ENCODE measurements at regions of chr17 and their contacts with region 1.

Region 1: GRCh38 chr17:45828628-45829027 is 16.1 kb upstream of the SPPL2C start:
- DNase-seq: no peak
- H3K4me3 Mint-ChIP-seq: no peak overlapping the region
- H3K27ac Mint-ChIP-seq: peak overlapping the region; percentile 58
- H3K4me1 Mint-ChIP-seq: peaks cover 7% of the 10 kb centered on the region
- H3K27me3 Mint-ChIP-seq: peaks cover 40% of the 10 kb centered on the region

Region 2: DNA sequence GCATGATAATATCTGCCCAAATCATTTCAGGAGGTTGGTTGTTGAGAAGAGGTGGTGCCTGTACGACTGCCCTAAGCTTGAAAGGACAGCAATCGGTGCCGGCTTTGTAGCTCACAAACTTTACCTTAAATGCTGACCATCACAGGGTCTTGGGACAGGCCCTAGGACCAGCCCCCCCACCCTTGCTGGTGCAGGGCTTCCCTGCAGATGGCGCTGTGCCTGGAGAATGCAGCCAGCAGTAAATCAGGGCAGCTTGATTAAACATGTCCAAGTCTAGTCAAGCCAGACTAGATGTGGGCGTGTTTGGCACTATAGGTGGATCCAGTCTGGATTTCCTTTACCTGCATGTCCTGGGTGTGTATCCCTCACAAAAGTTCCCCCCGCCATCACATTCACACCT is 180.0 kb before region 1 on chr17:
- CTCF ChIA-PET with region 1: interaction called, 10 read pairs
- DNase-seq: no peak
- H3K4me3 Mint-ChIP-seq: no peak overlapping the region
- H3K27ac Mint-ChIP-seq: no peak overlapping the region
- H3K4me1 Mint-ChIP-seq: peaks cover 6% of the 10 kb centered on the region
- H3K27me3 Mint-ChIP-seq: peaks cover 4% of the 10 kb centered on the region

Region 3: DNA sequence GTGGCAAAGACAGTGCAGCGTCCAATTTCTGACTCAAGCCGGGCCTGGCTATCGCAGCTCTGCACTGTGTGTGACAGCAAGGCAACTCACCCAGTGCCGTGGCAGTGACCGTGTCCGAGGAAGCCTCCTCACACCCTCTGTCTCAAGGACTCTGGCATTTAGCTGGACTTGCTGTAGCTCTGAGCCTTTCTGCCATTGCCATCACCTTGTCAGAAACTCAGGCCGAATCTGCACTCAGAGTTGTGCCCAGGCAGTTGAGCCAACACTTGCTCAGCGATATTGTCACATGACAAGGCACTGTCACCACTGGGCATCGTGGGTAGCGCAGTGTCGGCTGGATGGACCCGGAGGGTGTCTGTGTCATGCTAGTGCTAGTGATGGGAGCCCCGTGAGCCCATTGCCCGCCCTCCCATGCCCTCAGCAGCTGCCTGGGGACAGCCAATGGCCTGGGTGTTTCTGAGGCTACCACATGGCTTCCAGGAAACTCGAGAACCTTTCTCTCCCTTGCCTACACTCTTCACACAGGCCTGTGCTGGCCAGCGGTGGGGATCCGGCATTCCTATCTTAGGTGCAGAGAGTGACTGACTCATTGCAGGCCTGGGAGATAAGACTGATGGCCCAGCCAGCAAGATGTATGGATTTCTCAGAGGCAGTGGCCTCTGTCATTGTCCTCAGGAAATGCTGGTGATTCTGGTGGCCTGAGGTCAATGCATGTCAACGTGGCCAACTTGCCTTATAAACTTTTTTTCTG is 148.3 kb after region 1 on chr17:
- CTCF ChIA-PET with region 1: no interaction called
- DNase-seq: no peak
- H3K4me3 Mint-ChIP-seq: no peak overlapping the region
- H3K27ac Mint-ChIP-seq: no peak overlapping the region
- H3K4me1 Mint-ChIP-seq: peaks cover 3% of the 10 kb centered on the region
- H3K27me3 Mint-ChIP-seq: peaks cover 16% of the 10 kb centered on the region